Right ventricle myocardium inferior (tissue), 1 donor: ENCODE measurements at regions of chr16 and their contacts with region 1.

Region 1: GRCh38 chr16:82263521-82264143 is 93.6 kb upstream of the MPHOSPH6 start:
- DNase-seq: no peak
- ATAC-seq: peak; percentile 90

Region 2: GRCh38 chr16:82152196-82153112 is 111.2 kb before region 1 on chr16:
- intact Hi-C with region 1: no loop called
- DNase-seq: no peak
- ATAC-seq: no peak

Region 3: GRCh38 chr16:82344157-82344556 is 80.5 kb after region 1 on chr16:
- intact Hi-C with region 1: loop called (anchors 1 kb)
- DNase-seq: no peak
- ATAC-seq: peak; percentile 79

Region 4: DNA sequence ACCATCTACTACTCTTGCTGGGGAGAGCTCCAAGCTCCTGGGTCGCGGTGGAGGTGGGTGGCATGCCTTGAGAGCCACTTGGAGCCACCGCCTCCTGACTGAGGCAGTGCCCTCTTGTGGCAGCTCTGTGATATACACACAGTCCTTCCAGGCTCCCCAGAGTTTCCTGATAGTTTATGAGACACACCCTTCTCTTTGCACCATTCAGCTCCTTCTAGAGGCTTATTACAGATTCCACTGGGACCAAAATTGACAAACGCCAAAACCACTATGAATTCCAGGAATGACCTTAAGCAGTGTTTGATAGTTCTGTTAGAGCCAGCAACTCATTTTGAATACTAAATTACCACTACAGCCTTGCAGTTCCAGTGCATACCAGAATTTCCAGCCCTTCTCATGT is 193.1 kb after region 1 on chr16:
- intact Hi-C with region 1: loop called (anchors 5 kb)
- DNase-seq: no peak
- ATAC-seq: no peak

Region 5: DNA sequence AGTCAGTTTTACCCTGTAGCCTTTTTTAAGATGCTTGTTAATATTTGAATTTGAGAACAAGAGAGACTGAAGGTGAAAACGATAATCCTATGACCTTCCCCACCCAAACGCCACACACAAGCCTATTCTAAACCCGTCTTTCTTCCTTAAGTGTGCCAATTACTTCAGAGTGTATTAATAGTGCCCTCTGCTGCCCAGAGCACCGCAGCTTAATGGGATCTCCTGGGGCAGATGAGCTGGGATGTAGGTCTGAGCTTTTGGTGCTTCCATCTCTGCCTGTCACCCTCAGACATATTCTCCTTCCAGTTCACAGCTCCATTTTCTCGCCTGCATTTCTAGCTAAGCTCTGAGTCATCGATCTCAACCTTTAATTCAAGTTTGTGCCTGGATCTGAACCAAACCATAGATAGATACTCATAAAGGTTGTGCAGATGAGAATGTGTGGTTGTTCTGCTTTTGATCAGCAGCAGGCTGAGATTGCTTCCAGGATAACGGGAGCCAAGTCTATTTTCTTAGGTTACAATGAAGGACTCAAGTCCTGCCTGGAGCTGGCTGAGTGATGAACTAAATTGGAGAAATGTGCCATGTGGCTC is 316.8 kb after region 1 on chr16:
- intact Hi-C with region 1: loop called (anchors 5 kb)
- DNase-seq: no peak
- ATAC-seq: peak; percentile 57

Region 6: GRCh38 chr16:83441517-83441916 is 1177.9 kb after region 1 on chr16:
- intact Hi-C with region 1: loop called (anchors 10 kb)
- DNase-seq: no peak
- ATAC-seq: no peak